ENCODE measurements at regions of chr15 and their contacts with region 1.

Region 1: GRCh38 chr15:51162865-51163762 is 68.4 kb upstream of the TNFAIP8L3 start:
- DNase-seq: peak; percentile 41 to 62
- ATAC-seq: peak; percentile 96
- H3K4me3 ChIP-seq: peak overlapping the region in 3 of 4 donors; percentile 18 to 40 (median 33)
- H3K27ac ChIP-seq: peak overlapping the region; percentile 47 to 82 (median 61)
- H3K4me1 ChIP-seq: peaks cover 8 to 10% of the 10 kb centered on the region in 2 donors
- H3K27me3 ChIP-seq: no peaks in the 10 kb centered on the region
- CTCF ChIP-seq: peak; percentile 85 to 98 (median 94)
- POLR2A ChIP-seq: no peak

Region 2: DNA sequence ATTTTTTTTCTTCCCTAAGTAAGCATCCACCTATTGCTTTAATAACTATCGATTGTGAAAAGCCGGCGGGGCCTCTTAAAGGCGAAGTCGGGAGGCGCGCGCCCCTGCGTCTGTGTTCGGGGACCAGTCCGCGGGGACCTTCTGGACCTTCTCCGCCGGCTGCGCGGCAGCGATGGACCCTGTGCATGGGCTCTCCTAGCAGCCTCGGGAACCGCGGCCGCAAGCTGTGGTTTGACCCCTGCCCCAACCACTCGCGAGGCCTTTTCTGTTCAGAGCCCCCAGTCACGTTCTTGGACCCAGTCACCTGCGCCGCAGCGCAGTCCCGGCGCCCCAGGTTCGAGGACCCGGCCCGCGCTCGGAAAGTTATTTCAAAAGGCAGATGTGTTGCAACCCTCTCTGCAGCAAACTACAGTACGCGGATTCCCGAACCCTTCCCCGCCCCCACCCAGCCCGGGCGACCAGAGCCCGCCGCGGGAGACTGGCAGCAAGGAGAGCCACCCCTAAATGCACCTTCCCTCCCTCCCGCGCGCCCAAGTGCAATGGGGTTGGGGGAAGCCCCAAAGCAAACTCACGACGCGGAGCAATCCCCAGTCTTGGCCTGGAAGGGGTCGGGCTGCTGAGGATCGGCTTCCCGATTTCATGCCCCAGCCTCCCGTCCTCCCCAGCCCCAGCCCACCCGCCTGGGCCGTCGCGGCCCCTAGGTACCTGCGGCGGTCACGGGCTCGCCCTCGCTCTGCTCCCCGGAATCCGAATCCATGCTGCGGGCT is 69.1 kb before region 1 on chr15:
- in situ Hi-C with region 1: no loop called
- intact Hi-C with region 1: no loop called
- DNase-seq: no peak
- ATAC-seq: peak; percentile 31 to 40
- H3K4me3 ChIP-seq: peak overlapping the region; percentile 56 to 72 (median 58)
- H3K27ac ChIP-seq: peak overlapping the region in 2 of 4 donors; percentile 9 to 13
- H3K4me1 ChIP-seq: peaks cover 0 to 12% of the 10 kb centered on the region in 2 donors
- H3K27me3 ChIP-seq: peaks cover 14 to 37% (median 29%) of the 10 kb centered on the region in 3 donors
- CTCF ChIP-seq: no peak
- POLR2A ChIP-seq: no peak

Region 3: GRCh38 chr15:51192521-51193280 is 29.6 kb after region 1 on chr15:
- in situ Hi-C with region 1: loop called in 1 of 4 experiments (anchors 5 kb)
- intact Hi-C with region 1: loop called (anchors 1 kb)
- DNase-seq: peak; percentile 75 to 83
- ATAC-seq: peak; percentile 48 to 73
- H3K4me3 ChIP-seq: peak overlapping the region in 1 of 4 donors; percentile 10
- H3K27ac ChIP-seq: peak overlapping the region in 3 of 4 donors; percentile 83 to 90 (median 85)
- H3K4me1 ChIP-seq: peaks cover 26 to 37% of the 10 kb centered on the region in 2 donors
- H3K27me3 ChIP-seq: no peaks in the 10 kb centered on the region
- CTCF ChIP-seq: peak; percentile 80 to 95 (median 92)
- POLR2A ChIP-seq: no peak

Region 4: GRCh38 chr15:51198701-51199232 is 35.7 kb after region 1 on chr15:
- in situ Hi-C with region 1: loop called in 2 of 4 experiments (anchors 5 to 10 kb)
- intact Hi-C with region 1: no loop called
- DNase-seq: no peak
- ATAC-seq: no peak
- H3K4me3 ChIP-seq: no peak overlapping the region
- H3K27ac ChIP-seq: no peak overlapping the region
- H3K4me1 ChIP-seq: no peaks in the 10 kb centered on the region
- H3K27me3 ChIP-seq: no peaks in the 10 kb centered on the region
- CTCF ChIP-seq: no peak
- POLR2A ChIP-seq: no peak

Measured in gastrocnemius medialis (tissue), 4 donors.